GM12878 (cell line): ENCODE measurements at regions of chr1 and their contacts with region 1.

Region 1: DNA sequence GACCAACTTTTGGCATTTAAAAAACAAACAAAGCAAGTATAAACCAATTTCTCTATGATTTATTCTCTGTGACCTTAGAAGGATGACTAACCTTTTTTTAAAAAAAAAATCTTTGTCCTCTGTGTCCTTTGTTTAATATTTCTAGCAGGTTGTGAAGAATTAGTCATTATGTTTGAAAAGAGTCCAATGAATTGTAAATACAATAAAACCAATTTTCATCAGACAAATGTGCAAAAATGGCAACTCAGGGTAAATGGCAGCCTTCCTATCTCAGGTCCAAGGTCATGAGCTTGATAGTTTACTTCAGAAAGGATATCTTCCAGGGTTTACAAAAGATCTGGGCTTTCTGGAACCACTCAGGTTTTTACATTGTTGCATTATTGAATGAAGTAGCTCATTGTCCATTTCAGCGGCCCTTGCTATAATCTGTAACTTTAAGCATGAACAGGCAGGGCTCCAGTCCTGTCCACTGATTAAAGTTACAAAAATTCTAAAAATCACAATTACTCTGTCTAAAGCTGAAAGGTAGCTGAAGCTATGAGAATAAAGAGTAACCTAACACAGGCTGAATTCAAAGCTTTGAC is 11.7 kb upstream of the MAP3K21 start:
- DNase-seq: no peak
- ATAC-seq: no peak
- H3K4me3 ChIP-seq: no peak overlapping the region
- H3K27ac ChIP-seq: no peak overlapping the region
- H3K4me1 ChIP-seq: no peaks in the 10 kb centered on the region
- H3K27me3 ChIP-seq: peaks cover 1 to 11% of the 10 kb centered on the region in 2 experiments; a peak in 2 of 4 replicates
- CTCF ChIP-seq: no peak
- EP300 ChIP-seq: no peak
- POLR2A ChIP-seq: no peak
- RAD21 ChIP-seq: no peak

Region 2: GRCh38 chr1:233304489-233305102 is 11.2 kb before region 1 on chr1:
- CTCF ChIA-PET with region 1: interaction called, 14 read pairs
- POLR2A ChIA-PET with region 1: no interaction called
- RAD21 ChIA-PET with region 1: no interaction called
- SMC1A ChIA-PET with region 1: interaction called, 12 read pairs
- in situ Hi-C with region 1: no loop called
- intact Hi-C with region 1: no loop called
- DNase-seq: no peak
- ATAC-seq: peak; percentile 49; the same call in 2 of the 3 replicates
- H3K4me3 ChIP-seq: no peak overlapping the region
- H3K27ac ChIP-seq: no peak overlapping the region
- H3K4me1 ChIP-seq: no peaks in the 10 kb centered on the region
- H3K27me3 ChIP-seq: no peaks in the 10 kb centered on the region; a peak in 1 of 4 replicates
- CTCF ChIP-seq: peak; percentile 58 to 69 (median 69)
- EP300 ChIP-seq: no peak
- POLR2A ChIP-seq: no peak
- RAD21 ChIP-seq: peak; percentile 73